BJ (cell line): ENCODE measurements at regions of chr22 and their contacts with region 1.

Region 1: DNA sequence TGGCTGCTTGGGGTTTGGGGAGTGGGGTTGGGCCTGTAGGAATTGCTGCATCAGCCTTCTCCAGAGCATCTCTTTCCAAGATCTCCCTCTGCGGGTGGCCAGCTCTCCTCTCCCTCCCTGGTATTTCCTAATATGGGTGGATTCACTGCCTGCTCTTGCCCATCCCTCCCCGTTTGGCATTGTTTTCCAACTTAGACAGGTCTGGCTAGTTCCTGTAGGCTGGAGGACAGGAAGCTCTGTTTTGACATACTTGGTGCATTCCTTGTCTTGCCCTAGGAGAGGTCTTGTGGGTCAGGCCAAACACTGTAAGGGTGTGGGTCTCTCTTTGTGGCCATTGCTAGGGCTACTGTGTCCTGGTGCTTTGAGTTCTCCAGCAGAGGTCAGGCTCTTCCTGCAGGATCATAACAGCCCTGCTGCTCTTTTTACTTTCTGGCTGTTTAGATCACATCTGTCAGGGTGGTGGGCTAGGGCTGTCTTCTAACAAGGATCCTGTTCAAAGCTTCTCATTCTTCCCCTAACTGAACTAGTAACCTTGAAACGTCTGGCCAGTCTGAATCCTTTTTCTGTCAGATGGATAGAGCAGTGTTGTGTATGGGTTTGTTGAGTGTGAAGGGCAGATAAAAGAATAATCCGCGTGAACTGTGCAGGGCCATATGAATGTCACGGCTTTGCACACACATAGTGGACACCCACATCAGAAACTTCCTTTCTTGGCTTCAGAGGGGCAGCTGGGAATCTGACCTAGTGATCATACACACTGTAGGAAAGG is 18.3 kb upstream of the MICALL1 start:
- DNase-seq: no peak
- H3K4me3 ChIP-seq: no peak overlapping the region
- H3K27me3 ChIP-seq: no peaks in the 10 kb centered on the region
- CTCF ChIP-seq: peak; percentile 83

Region 2: DNA sequence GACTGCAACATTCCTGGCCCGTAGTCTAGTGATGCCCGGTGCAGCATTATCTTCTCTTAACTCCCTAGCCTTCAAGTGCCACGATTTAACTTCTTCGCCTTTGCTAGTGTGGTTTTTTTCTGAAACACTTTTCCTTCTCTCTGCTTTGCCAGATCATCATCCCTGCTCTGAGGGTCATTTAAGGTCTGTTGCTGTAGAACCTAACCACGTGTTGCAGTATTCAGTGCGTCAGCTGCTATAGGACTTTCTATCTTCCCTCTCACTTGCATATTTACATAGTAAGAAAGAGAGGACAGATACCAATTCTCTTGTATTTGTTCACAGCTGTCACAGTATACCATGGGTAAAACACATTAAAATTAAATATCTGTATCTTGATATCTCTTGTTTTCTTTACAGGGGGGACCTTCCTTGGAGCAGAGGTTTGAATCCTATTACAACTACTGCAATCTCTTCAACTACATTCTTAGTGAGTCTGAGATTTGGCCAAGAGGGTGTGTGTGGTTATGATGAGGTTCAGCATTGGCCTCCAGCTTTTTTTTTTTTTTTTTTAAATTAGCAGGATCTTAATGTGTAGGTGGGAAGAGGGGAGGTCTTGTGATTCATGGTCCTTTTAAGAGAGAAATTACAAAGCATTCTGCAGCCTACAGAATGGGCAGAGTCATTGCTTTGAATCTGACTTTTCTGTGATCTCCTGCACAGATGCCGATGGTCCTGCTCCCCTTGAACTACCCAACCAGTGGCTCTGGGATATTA is 25.0 kb before region 1 on chr22:
- CTCF ChIA-PET with region 1: interaction called, 17 read pairs
- POLR2A ChIA-PET with region 1: no interaction called
- DNase-seq: no peak
- H3K4me3 ChIP-seq: no peak overlapping the region
- H3K27me3 ChIP-seq: no peaks in the 10 kb centered on the region
- CTCF ChIP-seq: no peak

Region 3: GRCh38 chr22:37933711-37934376 is 46.0 kb after region 1 on chr22:
- CTCF ChIA-PET with region 1: interaction called, 62 read pairs
- POLR2A ChIA-PET with region 1: no interaction called
- DNase-seq: peak; percentile 72
- H3K4me3 ChIP-seq: no peak overlapping the region
- H3K27me3 ChIP-seq: no peaks in the 10 kb centered on the region
- CTCF ChIP-seq: peak; percentile 100

Region 4: GRCh38 chr22:37953437-37954179 is 65.8 kb after region 1 on chr22 and contains the starts of genes C22orf23 and POLR2F:
- CTCF ChIA-PET with region 1: interaction called, 10 read pairs
- POLR2A ChIA-PET with region 1: interaction called, 13 read pairs
- DNase-seq: peak; percentile 67
- H3K4me3 ChIP-seq: peak within 1 kb of the TSS; percentile 100
- H3K27me3 ChIP-seq: no peaks in the 10 kb centered on the region
- CTCF ChIP-seq: no peak
- polyA plus RNA-seq, gene C22orf23: 0.38 and 0.42 TPM in 2 replicates
- polyA plus RNA-seq, gene POLR2F: 86.2 and 92.1 TPM in 2 replicates

Region 5: GRCh38 chr22:37965940-37966664 is 78.3 kb after region 1 on chr22:
- CTCF ChIA-PET with region 1: interaction called, 20 read pairs
- POLR2A ChIA-PET with region 1: no interaction called
- DNase-seq: no peak
- H3K4me3 ChIP-seq: no peak overlapping the region
- H3K27me3 ChIP-seq: no peaks in the 10 kb centered on the region
- CTCF ChIP-seq: no peak